ENCODE measurements at regions of chr9 and their contacts with region 1.

Region 1: GRCh38 chr9:27247756-27248155 is 49.2 kb downstream of the EQTN start:
- DNase-seq: peak; percentile 43
- ATAC-seq: peak; percentile 99
- H3K4me3 ChIP-seq: no peak overlapping the region
- H3K27ac ChIP-seq: no peak overlapping the region
- H3K4me1 ChIP-seq: peaks cover 0 to 4% of the 10 kb centered on the region in 2 experiments; a peak in 2 of 4 replicates
- H3K27me3 ChIP-seq: no peaks in the 10 kb centered on the region
- CTCF ChIP-seq: peak; percentile 42 to 81 (median 78); a peak in 5 of 6 replicates
- POLR2A ChIP-seq: no peak
- RAD21 ChIP-seq: peak; percentile 53

Region 2: GRCh38 chr9:27276193-27277030 is 28.7 kb after region 1 on chr9:
- CTCF ChIA-PET with region 1: interaction called, 5 read pairs
- POLR2A ChIA-PET with region 1: no interaction called
- RAD21 ChIA-PET with region 1: no interaction called
- intact Hi-C with region 1: loop called (anchors 1 kb)
- DNase-seq: peak; percentile 42
- ATAC-seq: peak; percentile 81
- H3K4me3 ChIP-seq: no peak overlapping the region
- H3K27ac ChIP-seq: no peak overlapping the region
- H3K4me1 ChIP-seq: no peaks in the 10 kb centered on the region; a peak in 1 of 4 replicates
- H3K27me3 ChIP-seq: no peaks in the 10 kb centered on the region
- CTCF ChIP-seq: peak; percentile 56 to 85 (median 62); a peak in 5 of 6 replicates
- POLR2A ChIP-seq: no peak
- RAD21 ChIP-seq: peak; percentile 81

Region 3: GRCh38 chr9:27414220-27414761 is 166.5 kb after region 1 on chr9:
- CTCF ChIA-PET with region 1: no interaction called
- POLR2A ChIA-PET with region 1: no interaction called
- RAD21 ChIA-PET with region 1: no interaction called
- intact Hi-C with region 1: no loop called
- DNase-seq: no peak
- ATAC-seq: no peak
- H3K4me3 ChIP-seq: no peak overlapping the region
- H3K27ac ChIP-seq: no peak overlapping the region
- H3K4me1 ChIP-seq: no peaks in the 10 kb centered on the region
- H3K27me3 ChIP-seq: peaks cover 21% of the 10 kb centered on the region
- CTCF ChIP-seq: no peak
- POLR2A ChIP-seq: no peak
- RAD21 ChIP-seq: no peak

Region 4: DNA sequence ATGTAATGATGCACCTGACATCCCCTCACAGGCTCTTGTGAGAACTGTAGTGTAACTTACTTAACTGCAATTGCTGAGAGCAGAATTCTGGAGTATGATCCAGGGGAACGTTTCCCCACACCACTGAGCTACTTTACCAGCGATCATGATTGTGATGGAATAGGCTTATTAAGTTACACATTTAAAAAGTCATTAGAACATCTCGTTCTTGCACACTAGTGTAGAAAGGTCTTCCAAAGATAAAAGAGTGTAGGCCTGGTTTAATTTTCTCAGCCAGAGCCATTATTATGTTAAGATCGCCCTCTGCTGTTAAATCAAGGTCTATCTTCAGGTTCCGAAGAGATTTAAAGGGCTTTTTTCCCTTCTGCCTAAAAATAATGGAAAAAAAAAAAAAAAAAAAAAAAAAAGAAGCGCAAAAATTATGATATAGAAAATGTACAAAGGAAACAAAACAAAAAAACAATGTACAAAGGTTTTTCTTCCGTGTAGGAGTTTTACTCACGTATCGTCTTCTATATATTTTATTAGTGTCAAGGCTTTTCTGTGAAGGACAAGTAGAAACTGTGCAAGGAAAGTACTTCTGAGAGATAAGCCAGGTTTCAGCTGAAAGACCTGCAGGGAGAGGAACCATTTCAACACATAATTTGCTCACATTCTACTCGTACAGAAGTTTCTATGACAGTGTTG is 300.4 kb after region 1 on chr9:
- CTCF ChIA-PET with region 1: no interaction called
- POLR2A ChIA-PET with region 1: no interaction called
- RAD21 ChIA-PET with region 1: no interaction called
- intact Hi-C with region 1: loop called (anchors 1 kb)
- DNase-seq: peak; percentile 19
- ATAC-seq: peak; percentile 62; the same call in 1 of the 2 replicates
- H3K4me3 ChIP-seq: no peak overlapping the region
- H3K27ac ChIP-seq: no peak overlapping the region
- H3K4me1 ChIP-seq: no peaks in the 10 kb centered on the region
- H3K27me3 ChIP-seq: no peaks in the 10 kb centered on the region
- CTCF ChIP-seq: peak; percentile 21 to 57 (median 33); a peak in 4 of 6 replicates
- POLR2A ChIP-seq: no peak
- RAD21 ChIP-seq: peak; percentile 60

Measured in HCT116 (cell line).